HCT116 (cell line): ENCODE measurements at regions of chr16 and their contacts with region 1.

Region 1: DNA sequence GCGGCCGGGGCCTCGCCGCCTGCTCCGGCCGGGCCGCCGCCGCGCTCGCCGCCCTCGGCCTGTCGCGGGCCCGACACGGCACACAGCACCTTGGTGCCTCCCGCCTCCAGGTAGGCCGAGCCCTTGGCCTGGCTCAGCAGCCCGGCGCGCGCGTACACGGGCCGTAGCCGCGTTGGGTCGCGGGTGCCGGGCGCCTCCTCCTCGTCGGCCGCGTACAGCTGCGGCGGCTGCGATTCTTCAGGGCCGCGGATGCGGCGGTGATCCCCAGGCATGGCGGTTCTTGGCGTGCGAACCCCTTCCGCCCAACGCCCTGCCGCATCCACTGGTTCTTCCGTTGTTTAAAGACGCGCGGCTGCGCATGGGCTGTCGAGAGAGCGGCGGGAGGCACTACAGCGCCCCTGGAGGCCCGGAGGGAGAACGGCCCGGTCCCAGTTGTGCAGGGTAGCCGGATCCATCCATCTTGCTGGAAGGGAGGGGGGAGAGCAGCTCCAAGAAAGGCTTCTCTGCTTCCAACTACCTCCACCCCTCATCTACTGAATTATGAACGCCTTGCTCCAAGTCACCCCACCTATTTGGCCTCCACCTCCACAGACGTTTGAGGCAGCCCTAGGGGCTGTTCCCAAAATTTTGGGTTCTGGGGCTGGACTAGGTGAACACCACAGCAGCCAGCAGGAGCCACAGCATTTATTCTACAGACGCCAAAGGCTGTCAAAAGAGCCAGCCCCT is at the start of gene EXOSC6:
- DNase-seq: peak; percentile 87
- ATAC-seq: peak; percentile 92
- H3K4me3 ChIP-seq: peak within 1 kb of the TSS; percentile 59 to 82
- H3K27ac ChIP-seq: peak within 1 kb of the TSS; percentile 95
- H3K4me1 ChIP-seq: peaks cover 5 to 7% of the 10 kb centered on the region in 2 experiments; a peak in 2 of 4 replicates
- H3K27me3 ChIP-seq: no peaks in the 10 kb centered on the region
- CTCF ChIP-seq: peak; percentile 49 to 95 (median 88); a peak in 5 of 6 replicates
- POLR2A ChIP-seq: peak; percentile 36
- RAD21 ChIP-seq: no peak
- total RNA-seq, gene EXOSC6: 22.9 TPM

Region 2: DNA sequence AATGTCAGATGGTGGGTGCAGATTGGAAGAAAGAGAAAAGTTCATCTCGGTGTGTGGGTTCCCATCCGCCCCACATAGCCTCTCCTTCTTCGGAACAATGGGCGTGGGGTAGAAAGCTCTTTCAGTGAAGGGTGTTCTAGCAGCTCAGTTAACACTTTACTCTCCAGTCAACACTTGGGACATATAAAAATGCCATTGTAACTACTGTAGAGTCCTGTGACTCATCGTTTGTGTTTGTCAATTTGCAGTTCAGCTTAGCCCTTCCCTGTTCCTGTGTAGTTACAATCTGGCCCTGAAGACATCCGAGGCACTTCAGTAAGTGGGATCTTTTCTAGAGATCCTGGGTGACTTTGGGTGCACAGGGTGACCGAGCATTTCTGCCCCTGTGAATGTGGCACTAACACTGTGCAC is 89.7 kb before region 1 on chr16:
- CTCF ChIA-PET with region 1: no interaction called
- POLR2A ChIA-PET with region 1: no interaction called
- RAD21 ChIA-PET with region 1: no interaction called
- intact Hi-C with region 1: loop called (anchors 10 kb)
- DNase-seq: no peak
- ATAC-seq: peak; percentile 28; the same call in 1 of the 2 replicates
- H3K4me3 ChIP-seq: no peak overlapping the region
- H3K27ac ChIP-seq: no peak overlapping the region
- H3K4me1 ChIP-seq: peaks cover 6 to 9% of the 10 kb centered on the region in 2 experiments; a peak in 3 of 4 replicates
- H3K27me3 ChIP-seq: no peaks in the 10 kb centered on the region
- CTCF ChIP-seq: no peak
- POLR2A ChIP-seq: no peak
- RAD21 ChIP-seq: no peak

Region 3: DNA sequence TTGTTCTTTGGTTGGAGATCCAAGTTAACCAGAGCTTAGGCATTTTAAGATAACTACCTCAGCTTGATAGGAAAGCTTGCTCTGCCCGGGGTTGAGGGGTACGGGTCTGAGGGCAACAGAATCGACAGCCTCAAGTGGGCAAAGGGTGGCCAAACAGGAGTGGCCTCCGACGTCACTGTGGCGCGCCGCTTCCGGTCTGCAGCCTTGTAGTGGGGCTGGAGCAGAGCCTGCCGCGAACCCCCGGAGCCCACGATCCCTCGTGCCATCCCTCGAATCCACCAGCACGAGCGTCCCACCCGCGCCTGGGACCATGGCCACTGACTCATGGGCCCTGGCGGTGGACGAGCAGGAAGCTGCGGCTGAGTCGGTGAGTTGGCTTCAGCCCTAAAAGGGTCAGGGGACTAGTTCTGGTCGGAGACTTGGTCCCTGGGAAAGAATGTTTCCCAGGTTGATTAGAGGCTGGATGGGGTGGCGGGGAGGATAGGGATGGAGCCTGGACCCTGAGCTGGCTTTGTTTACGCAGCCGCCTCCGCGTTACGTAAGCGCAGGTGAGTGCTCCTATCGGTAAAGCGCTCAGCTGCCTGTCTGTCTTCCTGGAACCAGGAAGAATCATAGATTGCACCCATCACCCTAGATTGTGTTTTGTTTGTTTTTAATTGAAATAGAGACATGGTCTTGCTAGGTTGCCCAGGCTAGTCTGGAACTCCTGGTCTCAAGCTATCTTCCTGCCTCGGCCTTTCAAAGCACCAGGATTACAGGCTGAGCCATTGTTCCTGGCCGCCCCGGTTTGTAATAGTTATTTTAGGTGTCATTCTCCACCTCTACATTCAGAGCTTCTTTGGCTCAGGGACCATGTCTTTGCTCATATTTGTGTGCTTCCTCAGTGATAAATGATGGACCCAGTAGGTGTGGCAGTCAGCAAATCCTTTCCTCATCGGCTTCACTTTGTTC is 47.5 kb after region 1 on chr16 and contains the start of gene DDX19B:
- CTCF ChIA-PET with region 1: no interaction called
- POLR2A ChIA-PET with region 1: no interaction called
- RAD21 ChIA-PET with region 1: no interaction called
- intact Hi-C with region 1: no loop called
- DNase-seq: peak; percentile 40
- ATAC-seq: peak; percentile 96
- H3K4me3 ChIP-seq: peak within 1 kb of the TSS; percentile 77 to 89
- H3K27ac ChIP-seq: peak within 1 kb of the TSS; percentile 80
- H3K4me1 ChIP-seq: peaks cover 4 to 10% of the 10 kb centered on the region in 2 experiments; a peak in 2 of 4 replicates
- H3K27me3 ChIP-seq: no peaks in the 10 kb centered on the region
- CTCF ChIP-seq: no peak
- POLR2A ChIP-seq: peak; percentile 57
- RAD21 ChIP-seq: no peak
- total RNA-seq, gene DDX19B: 36.6 TPM